Endothelial cell of umbilical vein (primary cell): ENCODE measurements at regions of chr9 and their contacts with region 1.

Region 1: DNA sequence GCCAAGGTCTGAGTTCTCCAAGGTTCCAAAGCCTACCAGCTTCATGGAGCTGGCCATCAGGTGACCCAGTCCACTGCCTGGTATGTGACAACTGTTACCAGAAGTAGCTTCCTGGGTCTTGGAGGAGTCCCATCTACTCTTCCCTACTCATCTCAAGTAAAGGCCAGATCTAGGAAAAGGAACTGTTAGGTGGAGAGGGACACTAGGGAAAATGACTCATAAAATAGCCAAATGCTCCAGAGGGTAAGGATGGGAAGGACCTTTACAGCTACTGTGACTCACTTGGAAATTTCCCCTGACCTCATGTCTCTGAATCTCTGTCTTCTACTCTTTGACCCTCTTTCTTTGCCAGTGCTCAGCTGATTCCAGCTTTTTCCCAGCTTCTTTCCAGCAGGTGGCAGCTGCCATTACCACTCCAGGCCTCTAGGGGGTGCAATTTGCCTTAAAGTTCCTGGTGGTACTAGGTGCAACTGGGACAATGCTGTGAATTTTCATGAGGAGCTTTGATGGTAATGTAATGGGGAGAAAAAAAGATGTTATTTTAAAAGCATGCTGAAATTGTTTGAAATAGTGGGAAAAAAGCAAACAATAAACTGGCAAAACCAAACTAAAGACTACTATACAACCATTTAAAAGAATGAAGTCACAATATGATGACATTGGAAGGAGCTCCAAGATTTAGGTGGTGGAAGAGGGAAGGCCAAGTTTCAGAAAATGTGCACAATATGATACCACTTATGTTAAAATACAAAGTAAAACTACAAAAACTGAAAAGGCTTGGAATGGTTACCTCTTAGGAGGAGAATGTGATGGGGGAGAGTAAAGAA is 27.1 kb upstream of the MYORG start:
- DNase-seq: peak; percentile 66
- H3K4me3 ChIP-seq: no peak overlapping the region
- H3K27ac ChIP-seq: no peak overlapping the region
- H3K4me1 ChIP-seq: no peaks in the 10 kb centered on the region
- H3K27me3 ChIP-seq: no peaks in the 10 kb centered on the region
- CTCF ChIP-seq: peak; percentile 87 to 98
- POLR2A ChIP-seq: no peak

Region 2: DNA sequence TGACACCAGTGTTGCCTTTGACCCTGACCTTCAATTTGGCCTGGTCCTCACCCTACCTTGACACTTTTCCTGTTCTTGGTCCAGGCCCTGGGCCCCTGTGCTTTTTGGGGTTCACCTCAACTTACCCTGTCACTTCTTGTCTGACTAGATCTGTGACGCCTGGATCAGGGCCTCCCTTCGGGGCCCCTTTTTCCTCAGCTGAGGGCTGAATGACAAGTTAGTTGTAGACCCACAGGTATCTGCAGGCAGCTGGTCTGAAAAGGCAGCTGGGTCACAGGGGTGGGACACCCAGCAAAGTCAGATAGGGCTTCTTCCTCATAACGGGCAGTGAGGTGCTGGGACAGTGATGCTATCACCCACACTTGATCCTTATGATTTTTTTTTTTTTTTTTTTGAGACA is 17.1 kb before region 1 on chr9:
- CTCF ChIA-PET with region 1: interaction called, 29 read pairs
- POLR2A ChIA-PET with region 1: no interaction called
- dilution Hi-C with region 1: no loop called
- intact Hi-C with region 1: no loop called
- DNase-seq: no peak
- H3K4me3 ChIP-seq: no peak overlapping the region
- H3K27ac ChIP-seq: no peak overlapping the region
- H3K4me1 ChIP-seq: no peaks in the 10 kb centered on the region
- H3K27me3 ChIP-seq: peaks cover 0 to 9% of the 10 kb centered on the region in 2 experiments
- CTCF ChIP-seq: no peak
- POLR2A ChIP-seq: no peak

Region 3: DNA sequence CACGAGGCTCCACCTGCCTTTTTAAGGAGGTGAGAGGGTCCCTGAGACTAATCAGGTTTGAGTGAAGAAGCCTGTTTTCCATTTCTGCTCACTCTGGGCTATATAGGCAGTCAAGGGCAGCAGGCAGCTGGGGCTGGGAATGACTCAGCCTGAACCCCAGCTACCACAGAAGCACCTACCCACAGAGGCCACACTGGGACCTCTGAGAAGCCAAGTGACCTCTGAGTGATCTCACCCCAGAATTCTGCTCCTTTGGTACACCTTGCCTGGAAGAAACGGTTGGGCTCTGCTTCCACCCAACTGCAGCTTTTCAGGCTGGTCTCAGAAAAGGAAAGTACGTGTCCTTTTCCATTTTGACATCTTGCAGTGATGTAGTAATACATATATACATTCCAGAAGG is 47.8 kb after region 1 on chr9:
- CTCF ChIA-PET with region 1: interaction called, 19 read pairs
- POLR2A ChIA-PET with region 1: no interaction called
- dilution Hi-C with region 1: no loop called
- intact Hi-C with region 1: no loop called
- DNase-seq: no peak
- H3K4me3 ChIP-seq: no peak overlapping the region
- H3K27ac ChIP-seq: no peak overlapping the region
- H3K4me1 ChIP-seq: peaks cover 20% of the 10 kb centered on the region
- H3K27me3 ChIP-seq: no peaks in the 10 kb centered on the region
- CTCF ChIP-seq: no peak
- POLR2A ChIP-seq: no peak

Region 4: GRCh38 chr9:34513567-34514214 is 109.9 kb after region 1 on chr9:
- CTCF ChIA-PET with region 1: interaction called, 21 read pairs
- POLR2A ChIA-PET with region 1: no interaction called
- dilution Hi-C with region 1: loop called (anchors 25 kb)
- intact Hi-C with region 1: no loop called
- DNase-seq: no peak
- H3K4me3 ChIP-seq: no peak overlapping the region
- H3K27ac ChIP-seq: no peak overlapping the region
- H3K4me1 ChIP-seq: no peaks in the 10 kb centered on the region
- H3K27me3 ChIP-seq: peaks cover 2 to 7% of the 10 kb centered on the region in 2 experiments
- CTCF ChIP-seq: no peak
- POLR2A ChIP-seq: no peak

Region 5: DNA sequence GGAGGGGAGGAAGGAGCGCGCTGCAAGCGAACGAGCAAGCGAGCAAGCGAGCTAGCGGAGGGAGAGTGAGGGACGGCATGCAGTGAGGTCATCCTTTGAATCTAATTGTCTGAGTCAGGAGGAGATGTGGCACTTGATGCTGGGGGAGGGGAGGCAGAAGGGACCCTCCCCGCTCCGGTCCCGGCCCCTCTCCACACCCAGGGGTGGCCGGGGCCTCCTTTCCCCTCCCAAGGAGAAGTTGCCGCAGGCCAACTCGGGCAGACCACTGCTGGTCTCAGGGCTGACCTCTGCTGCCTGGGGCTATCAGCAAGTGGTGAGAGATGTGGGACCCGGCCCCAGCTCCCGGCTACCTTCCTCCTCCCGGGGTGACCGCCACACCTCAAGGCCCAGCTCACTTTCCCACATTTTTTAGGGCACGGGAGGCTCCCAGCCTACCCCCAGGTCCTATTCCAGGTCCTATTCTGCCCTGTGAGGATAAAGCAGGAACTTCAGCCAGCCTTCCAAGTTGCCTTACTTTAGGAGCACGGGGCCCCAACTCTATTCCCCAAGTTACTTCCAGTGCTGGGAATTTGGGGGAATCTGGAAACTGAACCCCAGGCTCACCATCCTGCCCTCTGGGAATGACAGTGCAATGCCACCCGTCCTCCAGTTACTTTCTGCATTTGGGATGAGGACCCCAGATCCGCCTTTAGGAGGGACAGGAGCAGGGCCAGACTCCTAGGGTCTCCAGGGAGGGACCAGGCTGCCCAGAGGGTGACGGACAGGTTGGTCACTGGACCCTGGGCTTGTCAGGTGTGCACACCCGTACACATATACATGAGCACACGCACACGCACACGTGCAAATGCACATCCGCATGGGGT is 174.7 kb after region 1 on chr9:
- CTCF ChIA-PET with region 1: interaction called, 22 read pairs
- POLR2A ChIA-PET with region 1: no interaction called
- dilution Hi-C with region 1: no loop called
- intact Hi-C with region 1: no loop called
- DNase-seq: peak; percentile 28
- H3K4me3 ChIP-seq: no peak overlapping the region
- H3K27ac ChIP-seq: no peak overlapping the region
- H3K4me1 ChIP-seq: no peaks in the 10 kb centered on the region
- H3K27me3 ChIP-seq: peaks cover 59 to 61% of the 10 kb centered on the region in 2 experiments
- CTCF ChIP-seq: no peak
- POLR2A ChIP-seq: no peak